Head of caudate nucleus (tissue), 42 donors: ENCODE measurements at regions of chr3 and their contacts with region 1.

Region 1: GRCh38 chr3:171459942-171460724 is at the start of gene TNIK:
- DNase-seq: peak; percentile 85 to 99 (median 96)

Region 2: DNA sequence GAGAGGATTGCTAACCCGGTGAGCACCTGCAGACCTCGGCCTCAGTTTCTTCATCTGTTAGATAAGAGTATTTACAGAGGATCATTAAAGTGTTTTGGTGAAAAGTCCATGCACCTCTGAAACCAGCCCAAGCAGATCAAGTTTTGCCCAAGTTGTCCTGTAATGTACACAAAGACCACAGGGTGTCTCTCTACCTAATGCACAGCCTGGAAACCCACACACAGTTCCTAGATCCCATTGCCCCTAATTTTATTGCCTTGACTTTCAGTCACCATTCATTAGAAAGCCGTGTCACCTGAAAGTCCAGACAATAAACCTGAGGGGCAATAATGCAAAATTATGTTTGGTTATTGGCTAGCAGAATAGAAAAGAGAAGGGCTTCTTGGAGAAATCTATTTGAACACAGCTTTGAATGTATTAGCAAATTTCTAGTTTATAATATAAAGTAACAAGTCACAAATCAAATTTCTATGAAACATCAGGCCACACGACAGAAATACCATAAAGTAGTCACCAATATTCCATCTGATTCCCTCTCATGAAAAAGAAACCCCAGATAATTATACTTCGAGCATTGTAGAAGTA is 272.3 kb before region 1 on chr3:
- intact Hi-C with region 1: loop called (anchors 5 kb)
- DNase-seq: peak in 16 of 42 donors; percentile 9 to 75 (median 40)

Region 3: GRCh38 chr3:171328419-171329082 is 131.6 kb before region 1 on chr3:
- intact Hi-C with region 1: loop called (anchors 10 kb)
- DNase-seq: peak in 17 of 42 donors; percentile 19 to 68 (median 46)

Region 4: GRCh38 chr3:171393032-171393744 is 66.9 kb before region 1 on chr3:
- intact Hi-C with region 1: loop called (anchors 10 kb)
- DNase-seq: peak in 5 of 42 donors; percentile 5 to 58 (median 34)

Region 5: DNA sequence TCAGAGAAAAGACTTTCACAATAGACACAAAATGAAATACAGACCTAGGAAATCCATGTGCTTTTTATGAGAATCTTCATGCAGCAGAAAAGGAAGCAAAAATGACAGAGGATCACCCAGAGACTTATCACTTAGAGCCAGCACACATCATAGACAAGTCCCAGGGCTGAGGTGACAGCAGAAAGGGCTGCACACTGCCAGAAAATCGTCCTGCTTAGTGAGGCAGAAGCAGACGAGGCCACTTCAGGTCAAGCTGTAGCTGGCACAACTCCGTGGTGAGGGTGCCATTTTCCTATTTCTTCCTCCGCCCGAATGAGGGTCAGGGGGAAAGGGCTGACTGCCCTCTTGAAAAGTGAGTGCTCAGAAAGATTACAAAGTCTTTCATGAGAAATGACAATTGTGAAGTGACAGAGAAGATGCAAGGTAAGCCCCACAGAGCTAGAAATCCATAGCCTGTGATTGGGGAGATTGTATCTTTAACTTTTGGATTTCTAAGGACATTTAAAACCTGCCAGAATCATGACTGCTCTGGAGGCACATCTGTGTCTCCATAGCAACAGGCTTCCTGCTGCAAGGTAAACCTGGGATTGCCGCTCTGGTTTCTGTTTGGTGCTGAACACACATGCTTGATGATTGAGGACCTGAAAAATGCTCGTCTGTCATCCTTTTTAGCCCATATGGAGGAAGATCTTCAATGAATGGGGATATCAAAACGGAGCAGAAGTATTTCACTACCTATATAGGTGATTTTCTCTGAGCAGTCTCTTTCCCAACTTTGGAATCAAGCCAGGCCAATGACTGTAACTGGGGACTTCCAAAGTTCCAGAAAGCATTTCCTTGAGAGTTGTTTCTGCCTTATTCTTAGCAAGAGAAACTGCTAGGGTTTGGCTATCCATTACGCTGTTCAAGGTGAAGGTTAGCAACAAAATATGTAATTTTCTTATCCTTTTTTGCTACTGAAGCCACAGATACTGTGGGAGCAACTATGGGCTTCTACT is 96.3 kb after region 1 on chr3:
- intact Hi-C with region 1: loop called (anchors 10 kb)
- DNase-seq: peak in 24 of 42 donors; percentile 5 to 67 (median 22)